Upper lobe of right lung (tissue), 1 donor: ENCODE measurements at regions of chr1 and their contacts with region 1.

Region 1: GRCh38 chr1:152189657-152190442 is 30.8 kb upstream of the RPTN start:
- DNase-seq: peak; percentile 76
- ATAC-seq: peak; percentile 75
- H3K4me3 ChIP-seq: peak overlapping the region; percentile 57
- H3K27ac ChIP-seq: peak overlapping the region; percentile 14
- H3K4me1 ChIP-seq: no peaks in the 10 kb centered on the region
- H3K27me3 ChIP-seq: no peaks in the 10 kb centered on the region
- CTCF ChIP-seq: peak; percentile 78

Region 2: DNA sequence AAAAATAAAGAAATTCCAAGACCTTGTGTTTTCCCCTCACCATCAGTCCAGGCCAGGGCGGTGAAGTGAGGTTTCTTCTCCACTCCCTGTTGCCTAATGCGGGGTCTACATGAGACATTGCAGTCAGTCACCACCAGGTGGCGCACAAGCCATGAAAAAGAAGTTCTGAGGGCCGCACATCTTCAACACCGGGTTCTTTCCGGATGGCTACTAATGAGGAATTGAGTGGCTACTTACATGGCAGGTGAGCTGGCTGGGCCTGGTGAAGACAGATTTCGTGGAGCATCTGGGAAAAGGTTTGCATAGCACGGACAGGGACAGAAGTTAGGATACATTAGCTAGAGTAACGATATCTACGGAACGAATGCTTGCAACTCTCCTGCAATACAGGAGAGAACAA is 137.2 kb before region 1 on chr1:
- intact Hi-C with region 1: loop called (anchors 10 kb)
- DNase-seq: peak; percentile 90
- ATAC-seq: peak; percentile 64
- H3K4me3 ChIP-seq: no peak overlapping the region
- H3K27ac ChIP-seq: no peak overlapping the region
- H3K4me1 ChIP-seq: peaks cover 14% of the 10 kb centered on the region
- H3K27me3 ChIP-seq: peaks cover 29% of the 10 kb centered on the region
- CTCF ChIP-seq: peak; percentile 94

Region 3: DNA sequence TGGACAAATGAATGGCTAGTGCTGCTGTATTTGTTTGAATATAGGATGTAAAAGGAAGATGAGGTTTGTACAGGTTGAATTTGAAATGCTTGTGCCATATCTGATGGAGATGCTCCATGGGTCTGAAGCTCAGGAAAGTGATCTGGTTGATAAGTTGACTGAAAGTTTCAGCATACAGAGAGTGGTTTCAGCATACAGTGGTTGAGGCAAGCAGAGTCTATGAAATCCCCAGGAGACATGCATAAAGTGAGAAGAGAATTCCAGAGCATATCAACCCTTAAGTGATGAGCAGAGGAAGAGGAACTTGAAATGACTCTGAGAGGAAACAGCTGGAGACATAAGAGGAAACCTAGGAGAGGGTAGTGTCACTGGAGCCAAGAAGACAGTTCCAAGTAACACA is 122.7 kb before region 1 on chr1:
- intact Hi-C with region 1: no loop called
- DNase-seq: no peak
- ATAC-seq: no peak
- H3K4me3 ChIP-seq: no peak overlapping the region
- H3K27ac ChIP-seq: no peak overlapping the region
- H3K4me1 ChIP-seq: no peaks in the 10 kb centered on the region
- H3K27me3 ChIP-seq: peaks cover 10% of the 10 kb centered on the region
- CTCF ChIP-seq: no peak

Region 4: GRCh38 chr1:152419917-152420316 is 230.1 kb after region 1 on chr1:
- intact Hi-C with region 1: no loop called
- DNase-seq: no peak
- ATAC-seq: no peak
- H3K4me3 ChIP-seq: no peak overlapping the region
- H3K27ac ChIP-seq: no peak overlapping the region
- H3K4me1 ChIP-seq: no peaks in the 10 kb centered on the region
- H3K27me3 ChIP-seq: no peaks in the 10 kb centered on the region
- CTCF ChIP-seq: no peak

Region 5: GRCh38 chr1:152459596-152460528 is 270.0 kb after region 1 on chr1:
- intact Hi-C with region 1: loop called (anchors 10 kb)
- DNase-seq: peak; percentile 86
- ATAC-seq: peak; percentile 90
- H3K4me3 ChIP-seq: peak overlapping the region; percentile 17
- H3K27ac ChIP-seq: peak overlapping the region; percentile 42
- H3K4me1 ChIP-seq: peaks cover 9% of the 10 kb centered on the region
- H3K27me3 ChIP-seq: no peaks in the 10 kb centered on the region
- CTCF ChIP-seq: peak; percentile 83

Region 6: DNA sequence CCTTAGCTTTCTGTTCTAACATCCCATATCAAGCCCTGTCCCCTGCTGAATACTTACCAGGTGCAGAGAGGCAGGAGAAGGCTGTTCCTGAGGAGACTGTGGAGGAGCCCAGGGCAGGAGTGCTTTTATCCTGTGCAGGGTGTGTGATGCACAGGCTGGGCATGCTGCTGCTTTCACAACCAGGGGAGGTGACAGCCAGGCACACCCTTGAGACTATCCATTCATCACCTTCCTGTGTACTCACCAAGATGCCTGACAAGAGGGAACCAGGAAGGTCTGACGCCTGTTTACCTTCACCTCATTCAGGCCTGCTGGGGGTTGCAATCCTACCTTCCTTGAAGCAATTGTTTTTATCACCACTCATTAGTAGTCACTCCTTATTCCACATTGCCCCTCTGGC is 376.8 kb after region 1 on chr1 and contains the start of gene LCE3E:
- intact Hi-C with region 1: no loop called
- DNase-seq: no peak
- ATAC-seq: no peak
- H3K4me3 ChIP-seq: no peak within 1 kb of the TSS
- H3K27ac ChIP-seq: no peak within 1 kb of the TSS
- H3K4me1 ChIP-seq: no peaks in the 10 kb centered on the region
- H3K27me3 ChIP-seq: peaks cover 4% of the 10 kb centered on the region
- CTCF ChIP-seq: no peak
- total RNA-seq, gene LCE3E: not detected